Breast epithelium (tissue), 4 donors: ENCODE measurements at regions of chr1 and their contacts with region 1.

Region 1: GRCh38 chr1:154183045-154183915 is 8.6 kb downstream of the TPM3 start:
- DNase-seq: peak; percentile 95 to 98
- H3K4me3 ChIP-seq: peak overlapping the region; percentile 80 to 93 (median 88)
- H3K27ac ChIP-seq: peak overlapping the region; percentile 92 to 93
- H3K4me1 ChIP-seq: peaks cover 12 to 19% of the 10 kb centered on the region in 2 donors
- H3K27me3 ChIP-seq: no peaks in the 10 kb centered on the region
- CTCF ChIP-seq: peak; percentile 13 to 45 (median 41)
- POLR2A ChIP-seq: peak; percentile 93

Region 2: DNA sequence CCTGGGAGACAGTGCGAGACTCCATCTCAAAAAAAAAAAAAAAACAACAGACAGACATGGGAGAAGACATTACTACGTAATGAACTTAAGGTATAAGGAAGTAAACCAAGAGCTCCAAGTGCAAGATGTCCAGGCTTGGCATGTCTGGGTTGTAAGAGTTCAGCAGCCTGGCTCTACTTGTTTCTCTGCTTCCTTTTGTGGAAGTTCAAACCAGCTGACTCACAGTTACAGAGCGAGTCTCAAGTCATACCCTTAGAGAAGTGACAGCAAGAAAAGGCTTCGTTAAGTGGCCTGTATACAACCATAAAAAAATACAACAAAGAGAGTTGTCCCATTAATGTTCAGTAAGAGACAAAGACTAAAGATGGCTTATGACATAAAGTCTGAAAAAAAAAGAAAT is 1726.6 kb after region 1 on chr1:
- intact Hi-C with region 1: loop called (anchors 10 kb)
- DNase-seq: peak in 1 of 2 donors; percentile 56
- H3K4me3 ChIP-seq: peak overlapping the region; percentile 70 to 90 (median 85)
- H3K27ac ChIP-seq: peak overlapping the region; percentile 96 to 97
- H3K4me1 ChIP-seq: no peaks in the 10 kb centered on the region
- H3K27me3 ChIP-seq: no peaks in the 10 kb centered on the region
- CTCF ChIP-seq: no peak
- POLR2A ChIP-seq: no peak